A549 (cell line): ENCODE measurements at regions of chrX and their contacts with region 1.

Region 1: DNA sequence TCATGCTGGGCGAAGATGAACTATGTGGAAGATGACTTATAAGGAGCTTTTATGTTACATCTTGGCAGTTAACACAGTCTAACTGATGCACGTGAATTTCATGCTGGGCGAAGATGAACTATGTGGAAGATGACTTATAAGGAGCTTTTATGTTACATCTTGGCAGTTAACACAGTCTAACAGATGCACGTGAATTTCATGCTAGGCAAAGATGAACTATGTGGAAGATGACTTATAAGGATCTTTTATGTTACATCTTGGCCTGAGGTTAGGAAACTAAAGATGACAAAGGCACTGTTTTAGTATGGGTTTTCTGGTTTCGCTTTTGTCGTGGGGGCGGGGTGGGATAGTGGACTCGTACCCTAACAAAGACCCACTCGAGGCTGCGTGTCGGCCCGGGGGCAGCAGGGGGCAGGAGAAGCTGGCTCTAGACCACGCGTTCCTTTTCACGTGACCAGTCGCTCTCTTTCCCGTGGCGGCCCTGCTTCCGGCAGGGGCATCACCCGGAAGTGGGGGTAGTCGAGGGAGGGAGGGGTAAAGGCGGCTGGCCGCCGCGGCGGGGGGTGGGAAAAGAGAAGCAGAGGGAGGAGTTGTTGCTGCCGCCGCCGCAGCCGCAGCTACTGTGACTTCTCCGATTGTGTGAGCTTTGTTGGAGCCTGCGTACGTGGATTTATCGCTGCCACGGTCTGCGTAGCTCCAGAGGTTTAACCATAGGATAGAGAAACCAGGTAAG is at the start of gene ATP7A:
- DNase-seq: peak; percentile 92 to 95
- ATAC-seq: peak; percentile 96 to 98
- H3K4me3 ChIP-seq: peak within 1 kb of the TSS; percentile 58
- H3K27ac ChIP-seq: peak within 1 kb of the TSS; percentile 80 to 86
- H3K4me1 ChIP-seq: peaks cover 12% of the 10 kb centered on the region; the same call in 2 of the 3 replicates
- CTCF ChIP-seq: peak; percentile 62
- EP300 ChIP-seq: no peak
- POLR2A ChIP-seq: 0 out of 2 replicates have a peak, but pooled peaks have one; percentile 39
- RAD21 ChIP-seq: peak; percentile 77 to 88
- polyA plus RNA-seq, gene ATP7A: 12.2 and 13.0 TPM in 2 replicates

Region 2: DNA sequence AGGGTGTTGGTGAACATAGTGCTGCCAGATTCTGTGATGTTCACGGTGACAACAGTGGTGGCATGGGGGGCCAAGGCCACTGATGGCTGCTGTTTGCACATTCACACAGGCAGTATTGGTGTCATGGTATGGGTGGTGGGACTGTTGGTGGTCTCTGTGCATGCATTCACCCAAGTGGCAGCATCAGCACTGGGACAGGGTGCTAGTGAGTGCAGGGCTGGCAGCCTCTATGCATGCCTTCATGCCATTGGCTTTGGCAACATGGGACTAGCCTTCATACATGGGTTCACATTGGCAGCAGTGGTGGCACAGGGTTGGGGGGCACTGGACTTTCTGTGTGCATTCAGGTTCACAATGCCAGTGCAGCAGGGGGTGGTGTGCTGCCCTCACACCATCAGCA is 952.8 kb before region 1 on chrX:
- CTCF ChIA-PET with region 1: no interaction called
- POLR2A ChIA-PET with region 1: no interaction called
- DNase-seq: no peak
- ATAC-seq: no peak
- H3K4me3 ChIP-seq: no peak overlapping the region
- H3K27ac ChIP-seq: no peak overlapping the region
- H3K4me1 ChIP-seq: no peaks in the 10 kb centered on the region
- CTCF ChIP-seq: no peak
- EP300 ChIP-seq: no peak
- POLR2A ChIP-seq: no peak
- RAD21 ChIP-seq: no peak

Region 3: GRCh38 chrX:77899081-77899828 is 11.0 kb before region 1 on chrX and contains the start of gene COX7B:
- CTCF ChIA-PET with region 1: interaction called, 35 read pairs
- POLR2A ChIA-PET with region 1: interaction called, 48 read pairs
- DNase-seq: peak; percentile 72 to 97
- ATAC-seq: peak; percentile 82 to 83
- H3K4me3 ChIP-seq: peak within 1 kb of the TSS; percentile 85
- H3K27ac ChIP-seq: peak within 1 kb of the TSS; percentile 83 to 89
- H3K4me1 ChIP-seq: peaks cover 5% of the 10 kb centered on the region; the same call in 1 of the 3 replicates
- CTCF ChIP-seq: peak; percentile 44; the same call in 2 of the 3 replicates
- EP300 ChIP-seq: no peak
- POLR2A ChIP-seq: no peak; the same call in none of the 2 replicates
- RAD21 ChIP-seq: peak; percentile 46 to 50; a peak in 4 of 5 replicates
- polyA plus RNA-seq, gene COX7B: 1,133 and 1,475 TPM in 2 replicates